GM12878 (cell line): ENCODE measurements at regions of chr20 and their contacts with region 1.

Region 1: GRCh38 chr20:13261460-13262301 is 40.6 kb downstream of the ISM1 start:
- DNase-seq: no peak
- ATAC-seq: peak; percentile 94
- H3K4me3 ChIP-seq: no peak overlapping the region
- H3K27ac ChIP-seq: no peak overlapping the region
- H3K4me1 ChIP-seq: no peaks in the 10 kb centered on the region
- H3K27me3 ChIP-seq: no peaks in the 10 kb centered on the region
- CTCF ChIP-seq: peak; percentile 54 to 76 (median 75)
- EP300 ChIP-seq: no peak
- POLR2A ChIP-seq: no peak
- RAD21 ChIP-seq: peak; percentile 71

Region 2: GRCh38 chr20:13219327-13220193 is 42.1 kb before region 1 on chr20:
- CTCF ChIA-PET with region 1: interaction called, 3 read pairs
- POLR2A ChIA-PET with region 1: interaction called, 4 read pairs
- RAD21 ChIA-PET with region 1: no interaction called
- SMC1A ChIA-PET with region 1: no interaction called
- in situ Hi-C with region 1: loop called (anchors 5 kb)
- intact Hi-C with region 1: no loop called
- DNase-seq: no peak
- ATAC-seq: no peak
- H3K4me3 ChIP-seq: no peak overlapping the region
- H3K27ac ChIP-seq: no peak overlapping the region
- H3K4me1 ChIP-seq: peaks cover 4% of the 10 kb centered on the region; the same call in 1 of the 2 replicates
- H3K27me3 ChIP-seq: peaks cover 9 to 30% of the 10 kb centered on the region in 2 experiments
- CTCF ChIP-seq: no peak
- EP300 ChIP-seq: no peak
- POLR2A ChIP-seq: no peak
- RAD21 ChIP-seq: no peak